ENCODE measurements at regions of chr1 and their contacts with region 1.

Region 1: DNA sequence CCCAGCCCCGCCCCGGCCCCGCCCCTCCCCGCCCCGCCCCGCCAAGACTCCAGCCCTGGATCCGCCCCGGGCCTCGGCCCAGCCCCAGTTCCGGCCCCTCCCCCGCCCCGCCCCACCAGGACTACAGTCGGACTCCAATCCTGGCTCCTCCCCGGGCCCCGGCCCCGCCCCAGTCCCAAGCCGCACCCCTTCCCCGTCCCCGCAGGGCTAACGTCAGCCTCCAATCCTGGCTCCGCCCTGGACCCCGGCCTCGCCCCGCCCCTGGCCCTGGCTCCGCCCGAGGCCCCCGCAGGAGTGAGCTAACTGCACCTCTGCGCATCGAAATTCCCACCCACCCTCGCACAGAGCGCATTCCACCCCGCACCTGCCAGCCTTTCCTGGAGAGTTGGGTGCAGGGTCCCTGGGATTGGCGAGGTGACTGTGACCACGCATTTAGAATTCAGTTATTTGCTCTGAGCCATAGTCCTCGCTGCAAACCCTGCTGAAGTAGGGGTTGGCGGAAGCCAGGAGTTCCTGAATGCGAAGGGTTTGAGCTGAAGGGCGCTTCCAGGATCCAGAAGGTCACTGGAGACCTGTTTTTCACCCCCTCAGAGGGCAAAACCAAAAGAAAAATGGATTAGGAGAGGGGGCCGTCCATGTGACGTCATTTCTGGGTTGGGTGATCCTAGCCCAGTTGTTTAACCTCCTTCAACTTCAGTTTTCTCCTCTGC is 588 bp upstream of the IGSF8 start:
- DNase-seq: peak; percentile 96 to 99 (median 98)
- ATAC-seq: peak; percentile 86
- H3K4me3 ChIP-seq: peak overlapping the region; percentile 61 to 82
- H3K4me3 Mint-ChIP-seq: peak overlapping the region; percentile 80
- H3K27ac ChIP-seq: peak overlapping the region; percentile 93 to 99
- H3K27ac Mint-ChIP-seq: peak overlapping the region; percentile 94
- H3K4me1 ChIP-seq: peaks cover 77% of the 10 kb centered on the region
- H3K4me1 Mint-ChIP-seq: peaks cover 77% of the 10 kb centered on the region
- H3K27me3 ChIP-seq: no peaks in the 10 kb centered on the region
- H3K27me3 Mint-ChIP-seq: no peaks in the 10 kb centered on the region
- CTCF ChIP-seq: no peak

Region 2: GRCh38 chr1:159780583-159781582 is 318.1 kb before region 1 on chr1 and contains the start of gene DUSP23:
- CTCF ChIA-PET with region 1: no interaction called
- POLR2A ChIA-PET with region 1: no interaction called
- intact Hi-C with region 1: loop called (anchors 5 kb)
- DNase-seq: peak; percentile 90 to 98 (median 95)
- ATAC-seq: peak; percentile 96
- H3K4me3 ChIP-seq: peak within 1 kb of the TSS; percentile 59 to 69
- H3K4me3 Mint-ChIP-seq: peak within 1 kb of the TSS; percentile 89
- H3K27ac ChIP-seq: peak within 1 kb of the TSS; percentile 16 to 62
- H3K27ac Mint-ChIP-seq: peak within 1 kb of the TSS; percentile 89
- H3K4me1 ChIP-seq: peaks cover 10% of the 10 kb centered on the region
- H3K4me1 Mint-ChIP-seq: peaks cover 28% of the 10 kb centered on the region
- H3K27me3 ChIP-seq: no peaks in the 10 kb centered on the region
- H3K27me3 Mint-ChIP-seq: no peaks in the 10 kb centered on the region
- CTCF ChIP-seq: peak; percentile 78
- total RNA-seq, gene DUSP23: 3.8 to 6.3 TPM

Region 3: GRCh38 chr1:160046494-160047110 is 52.4 kb before region 1 on chr1:
- CTCF ChIA-PET with region 1: interaction called, 11 read pairs
- POLR2A ChIA-PET with region 1: no interaction called
- intact Hi-C with region 1: no loop called
- DNase-seq: peak in 7 of 9 experiments; percentile 11 to 66 (median 36)
- ATAC-seq: peak; percentile 80
- H3K4me3 ChIP-seq: peak overlapping the region in 1 of 2 experiments; percentile 24
- H3K4me3 Mint-ChIP-seq: peak overlapping the region; percentile 76
- H3K27ac ChIP-seq: no peak overlapping the region
- H3K27ac Mint-ChIP-seq: no peak overlapping the region
- H3K4me1 ChIP-seq: peaks cover 6% of the 10 kb centered on the region
- H3K4me1 Mint-ChIP-seq: peaks cover 12% of the 10 kb centered on the region
- H3K27me3 ChIP-seq: peaks cover 0 to 2% of the 10 kb centered on the region in 2 experiments
- H3K27me3 Mint-ChIP-seq: peaks cover 17% of the 10 kb centered on the region
- CTCF ChIP-seq: peak; percentile 46

Region 4: GRCh38 chr1:160193091-160193819 is 94.2 kb after region 1 on chr1:
- CTCF ChIA-PET with region 1: interaction called, 5 read pairs
- POLR2A ChIA-PET with region 1: no interaction called
- intact Hi-C with region 1: loop called (anchors 5 kb)
- DNase-seq: peak; percentile 58 to 89 (median 81)
- ATAC-seq: peak; percentile 95
- H3K4me3 ChIP-seq: no peak overlapping the region
- H3K4me3 Mint-ChIP-seq: no peak overlapping the region
- H3K27ac ChIP-seq: no peak overlapping the region
- H3K27ac Mint-ChIP-seq: no peak overlapping the region
- H3K4me1 ChIP-seq: no peaks in the 10 kb centered on the region
- H3K4me1 Mint-ChIP-seq: no peaks in the 10 kb centered on the region
- H3K27me3 ChIP-seq: peaks cover 0 to 2% of the 10 kb centered on the region in 2 experiments
- H3K27me3 Mint-ChIP-seq: no peaks in the 10 kb centered on the region
- CTCF ChIP-seq: peak; percentile 83

Region 5: DNA sequence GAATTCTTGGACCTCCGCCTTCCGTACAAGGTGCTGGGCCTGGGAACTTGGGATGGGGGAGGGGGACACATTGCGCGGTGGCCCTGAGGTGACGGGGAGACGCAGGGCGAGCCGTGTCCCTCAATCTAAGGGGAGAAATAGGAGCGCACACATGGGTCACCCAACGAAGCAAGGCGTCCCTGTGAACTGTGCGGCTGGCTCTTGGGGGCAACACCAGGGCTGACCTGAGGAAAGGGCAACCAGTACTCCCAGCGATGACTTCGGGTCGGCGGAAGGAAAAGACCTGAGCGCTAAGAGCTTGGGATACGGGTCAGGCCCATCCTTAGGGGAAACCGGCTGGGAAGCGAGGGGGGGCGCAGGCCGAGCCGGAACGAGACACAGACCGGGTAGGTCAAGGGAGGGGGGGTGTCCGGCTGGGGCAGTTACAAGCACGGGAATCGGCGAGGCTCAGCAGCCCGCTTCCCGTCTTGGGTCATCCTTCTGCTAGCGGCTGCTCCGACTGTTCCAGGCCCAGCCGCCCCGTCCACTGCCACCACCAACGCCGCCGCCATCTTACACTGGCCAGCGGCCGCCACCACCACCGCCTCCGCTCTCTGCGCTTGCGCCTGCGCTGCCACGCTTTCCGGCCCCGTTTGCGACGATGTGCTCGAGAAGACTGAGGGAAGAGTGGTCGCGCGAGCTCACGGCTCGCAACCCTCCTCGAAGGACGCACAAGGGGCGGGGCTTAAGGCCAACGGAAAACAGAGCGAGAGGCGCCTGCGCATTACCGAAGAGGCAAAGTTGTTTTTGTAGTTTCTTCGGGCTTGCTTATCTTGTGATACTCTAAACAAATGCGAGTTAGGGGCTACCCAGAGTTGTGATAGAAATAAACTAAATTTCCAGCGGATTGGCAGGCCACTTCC is 163.1 kb after region 1 on chr1 and contains the start of gene DCAF8:
- CTCF ChIA-PET with region 1: interaction called, 20 read pairs
- POLR2A ChIA-PET with region 1: interaction called, 7 read pairs
- intact Hi-C with region 1: loop called (anchors 1 to 2 kb)
- DNase-seq: peak; percentile 97 to 99 (median 98)
- ATAC-seq: peak; percentile 87
- H3K4me3 ChIP-seq: peak within 1 kb of the TSS; percentile 91 to 99
- H3K4me3 Mint-ChIP-seq: peak within 1 kb of the TSS; percentile 96
- H3K27ac ChIP-seq: peak within 1 kb of the TSS; percentile 83 to 99
- H3K27ac Mint-ChIP-seq: peak within 1 kb of the TSS; percentile 98
- H3K4me1 ChIP-seq: peaks cover 31% of the 10 kb centered on the region
- H3K4me1 Mint-ChIP-seq: peaks cover 41% of the 10 kb centered on the region
- H3K27me3 ChIP-seq: no peaks in the 10 kb centered on the region
- H3K27me3 Mint-ChIP-seq: no peaks in the 10 kb centered on the region
- CTCF ChIP-seq: no peak
- total RNA-seq, gene DCAF8: 152 to 162 TPM

Region 6: GRCh38 chr1:160342953-160343869 is 244.2 kb after region 1 on chr1 and contains the starts of genes COPA and NCSTN:
- CTCF ChIA-PET with region 1: no interaction called
- POLR2A ChIA-PET with region 1: no interaction called
- intact Hi-C with region 1: loop called in 1 of 2 experiments (anchors 1 kb)
- DNase-seq: peak; percentile 82 to 97 (median 89)
- ATAC-seq: peak; percentile 98
- H3K4me3 ChIP-seq: peak within 1 kb of the TSS; percentile 78 to 98
- H3K4me3 Mint-ChIP-seq: peak within 1 kb of the TSS; percentile 100
- H3K27ac ChIP-seq: peak within 1 kb of the TSS; percentile 88 to 97
- H3K27ac Mint-ChIP-seq: peak within 1 kb of the TSS; percentile 100
- H3K4me1 ChIP-seq: peaks cover 12% of the 10 kb centered on the region
- H3K4me1 Mint-ChIP-seq: peaks cover 72% of the 10 kb centered on the region
- H3K27me3 ChIP-seq: no peaks in the 10 kb centered on the region
- H3K27me3 Mint-ChIP-seq: no peaks in the 10 kb centered on the region
- CTCF ChIP-seq: no peak
- total RNA-seq, gene COPA: 116 to 126 TPM
- total RNA-seq, gene NCSTN: 55.6 to 58.4 TPM

Region 7: DNA sequence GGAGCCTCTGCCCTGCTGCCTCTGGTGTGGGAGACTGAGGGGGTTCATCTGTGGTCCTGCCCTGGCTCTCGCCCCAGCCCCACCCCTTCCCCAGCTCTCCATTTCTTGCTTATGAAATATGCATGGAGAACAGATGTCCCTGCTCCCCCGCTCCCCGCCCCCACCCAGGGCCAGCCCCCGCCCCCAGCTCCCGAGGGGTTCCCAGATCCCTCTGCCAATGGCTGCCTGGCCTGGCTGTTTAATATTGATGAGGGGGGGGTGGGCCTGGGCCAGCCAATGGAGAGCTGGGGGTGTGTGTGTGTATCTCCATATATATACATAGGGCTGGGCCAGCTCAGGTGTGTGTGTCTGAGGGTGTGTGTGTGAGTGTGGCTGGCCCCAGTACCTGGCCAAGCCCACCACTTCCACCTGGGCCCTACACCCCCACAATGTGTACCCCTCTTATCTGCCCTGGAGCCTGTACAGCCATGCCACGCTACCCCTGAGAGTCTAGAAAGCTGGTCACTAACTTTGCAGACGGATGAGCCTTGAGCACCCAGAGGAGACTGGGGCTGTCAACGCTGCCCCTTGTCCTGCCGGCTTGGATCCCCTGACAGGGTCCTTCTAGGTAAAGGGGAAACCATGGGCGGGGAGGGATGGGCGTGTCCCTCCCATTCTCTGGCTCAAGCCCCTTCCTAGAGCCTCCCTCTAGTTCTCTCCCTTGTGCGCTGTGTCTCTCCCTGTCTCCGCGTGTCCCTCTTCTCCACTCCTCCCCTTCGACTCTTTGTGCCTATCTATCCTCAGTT is 267.9 kb after region 1 on chr1 and contains the start of gene NHLH1:
- CTCF ChIA-PET with region 1: no interaction called
- POLR2A ChIA-PET with region 1: no interaction called
- intact Hi-C with region 1: no loop called
- DNase-seq: peak in 1 of 9 experiments; percentile 23
- ATAC-seq: no peak
- H3K4me3 ChIP-seq: no peak within 1 kb of the TSS
- H3K4me3 Mint-ChIP-seq: no peak within 1 kb of the TSS
- H3K27ac ChIP-seq: no peak within 1 kb of the TSS
- H3K27ac Mint-ChIP-seq: no peak within 1 kb of the TSS
- H3K4me1 ChIP-seq: no peaks in the 10 kb centered on the region
- H3K4me1 Mint-ChIP-seq: no peaks in the 10 kb centered on the region
- H3K27me3 ChIP-seq: no peaks in the 10 kb centered on the region
- H3K27me3 Mint-ChIP-seq: no peaks in the 10 kb centered on the region
- CTCF ChIP-seq: no peak
- total RNA-seq, gene NHLH1: 0.24 TPM in 1 of 2 experiments, not detected in the other

Measured in CD8-positive, alpha-beta T cell (primary cell).